ENCODE measurements at regions of chr7 and their contacts with region 1.

Region 1: DNA sequence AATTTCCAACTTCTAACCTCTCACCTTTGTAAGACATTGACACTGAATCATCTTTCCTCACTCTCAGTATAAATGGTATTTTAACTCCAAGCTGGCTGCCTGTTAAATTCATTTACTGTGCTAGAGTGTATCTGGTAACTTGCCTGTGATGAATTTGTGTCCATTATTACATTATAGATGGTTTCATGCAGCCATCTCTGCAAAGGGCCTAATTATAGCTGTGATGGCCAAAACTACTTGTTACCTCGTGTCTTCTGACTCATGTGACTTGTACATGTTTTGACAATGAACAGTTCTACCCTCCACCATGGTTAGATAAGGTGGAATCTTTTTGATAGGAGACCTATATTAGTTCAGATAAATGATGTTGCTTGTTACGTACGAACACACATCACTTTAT is 392.0 kb downstream of the PAXIP1 start:
- DNase-seq: no peak
- H3K4me3 ChIP-seq: no peak overlapping the region
- H3K4me3 Mint-ChIP-seq: no peak overlapping the region
- H3K27ac ChIP-seq: no peak overlapping the region
- H3K27ac Mint-ChIP-seq: no peak overlapping the region
- H3K4me1 ChIP-seq: no peaks in the 10 kb centered on the region
- H3K4me1 Mint-ChIP-seq: no peaks in the 10 kb centered on the region
- H3K27me3 ChIP-seq: no peaks in the 10 kb centered on the region
- H3K27me3 Mint-ChIP-seq: peaks cover 0 to 1% (median 0%) of the 10 kb centered on the region in 3 donors
- CTCF ChIP-seq: no peak

Region 2: DNA sequence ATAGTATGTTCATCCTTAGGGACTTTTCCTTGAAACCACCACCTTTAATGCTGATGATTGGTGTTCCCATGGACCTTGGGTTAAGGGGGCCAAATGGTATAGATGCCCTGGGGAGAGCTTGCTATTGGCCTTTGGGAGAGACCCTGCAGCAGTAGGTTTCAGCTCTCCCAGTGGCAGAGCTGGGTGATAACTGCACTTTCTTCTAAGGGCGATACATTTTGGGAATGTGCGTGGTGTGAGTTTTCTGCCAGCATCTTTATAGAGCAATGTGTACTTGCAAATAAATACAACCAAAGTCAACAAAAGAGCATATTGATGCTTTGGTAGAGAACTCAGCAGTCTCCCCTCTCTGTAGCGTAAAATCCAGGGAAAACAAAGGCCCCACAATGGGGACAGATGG is 12.0 kb before region 1 on chr7:
- intact Hi-C with region 1: loop called in 1 of 2 experiments (anchors 1 kb)
- DNase-seq: no peak
- H3K4me3 ChIP-seq: no peak overlapping the region
- H3K4me3 Mint-ChIP-seq: no peak overlapping the region
- H3K27ac ChIP-seq: no peak overlapping the region
- H3K27ac Mint-ChIP-seq: no peak overlapping the region
- H3K4me1 ChIP-seq: no peaks in the 10 kb centered on the region
- H3K4me1 Mint-ChIP-seq: no peaks in the 10 kb centered on the region
- H3K27me3 ChIP-seq: no peaks in the 10 kb centered on the region
- H3K27me3 Mint-ChIP-seq: peaks cover 0 to 3% (median 0%) of the 10 kb centered on the region in 3 donors
- CTCF ChIP-seq: no peak

Measured in CD14-positive monocyte (primary cell).